ENCODE measurements at regions of chr14 and their contacts with region 1.

Region 1: GRCh38 chr14:77301103-77301502 is 19.6 kb downstream of the POMT2 start:
- DNase-seq: peak; percentile 68
- H3K4me3 ChIP-seq: no peak overlapping the region
- H3K27ac ChIP-seq: no peak overlapping the region
- H3K4me1 ChIP-seq: no peaks in the 10 kb centered on the region
- H3K27me3 ChIP-seq: no peaks in the 10 kb centered on the region
- CTCF ChIP-seq: peak; percentile 36 to 82 (median 74)
- POLR2A ChIP-seq: no peak

Region 2: GRCh38 chr14:77347751-77348150 is 46.6 kb after region 1 on chr14:
- intact Hi-C with region 1: no loop called
- DNase-seq: no peak
- H3K4me3 ChIP-seq: no peak overlapping the region
- H3K27ac ChIP-seq: no peak overlapping the region
- H3K4me1 ChIP-seq: no peaks in the 10 kb centered on the region
- H3K27me3 ChIP-seq: no peaks in the 10 kb centered on the region
- CTCF ChIP-seq: no peak
- POLR2A ChIP-seq: no peak

Region 3: GRCh38 chr14:77554207-77554606 is 253.1 kb after region 1 on chr14:
- intact Hi-C with region 1: loop called (anchors 5 kb)
- DNase-seq: no peak
- H3K4me3 ChIP-seq: no peak overlapping the region
- H3K27ac ChIP-seq: no peak overlapping the region
- H3K4me1 ChIP-seq: no peaks in the 10 kb centered on the region
- H3K27me3 ChIP-seq: no peaks in the 10 kb centered on the region
- CTCF ChIP-seq: no peak
- POLR2A ChIP-seq: no peak

Measured in prostate gland (tissue), 2 donors.